H1 (cell line): ENCODE measurements at regions of chr12 and their contacts with region 1.

Region 1: DNA sequence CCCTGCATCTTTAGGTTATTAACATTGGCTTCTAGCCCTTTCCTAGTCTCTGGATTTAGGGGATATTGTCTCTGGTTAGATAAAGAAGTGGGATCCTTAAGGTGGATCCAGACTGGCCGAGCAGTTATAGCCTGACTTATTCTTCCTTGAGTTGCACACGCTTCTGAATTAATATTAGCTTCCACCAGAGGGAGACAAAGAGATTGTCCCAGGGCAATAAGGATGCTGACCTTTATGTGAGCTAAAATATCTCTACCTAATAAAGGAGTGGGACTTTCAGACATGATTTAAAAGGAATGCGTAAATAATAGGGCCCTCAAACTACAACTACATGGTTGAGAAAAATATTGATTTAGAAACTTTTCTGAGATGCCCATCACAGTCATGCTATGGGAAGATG is 139.7 kb downstream of the SLCO1B3 start:
- DNase-seq: no peak
- H3K4me3 ChIP-seq: no peak overlapping the region
- H3K27ac ChIP-seq: no peak overlapping the region
- H3K4me1 ChIP-seq: no peaks in the 10 kb centered on the region
- H3K27me3 ChIP-seq: no peaks in the 10 kb centered on the region
- CTCF ChIP-seq: peak in 2 of 3 experiments; percentile 45 to 54; a peak in 3 of 4 replicates
- EP300 ChIP-seq: no peak
- POLR2A ChIP-seq: no peak
- RAD21 ChIP-seq: peak; percentile 51 to 55

Region 2: GRCh38 chr12:20696181-20696905 is 253.9 kb before region 1 on chr12:
- CTCF ChIA-PET with region 1: no interaction called
- POLR2A ChIA-PET with region 1: no interaction called
- DNase-seq: no peak
- H3K4me3 ChIP-seq: no peak overlapping the region
- H3K27ac ChIP-seq: no peak overlapping the region
- H3K4me1 ChIP-seq: peaks cover 0 to 4% (median 4%) of the 10 kb centered on the region in 4 experiments; a peak in 4 of 7 replicates
- H3K27me3 ChIP-seq: no peaks in the 10 kb centered on the region
- CTCF ChIP-seq: no peak
- EP300 ChIP-seq: no peak
- POLR2A ChIP-seq: no peak
- RAD21 ChIP-seq: no peak

Region 3: DNA sequence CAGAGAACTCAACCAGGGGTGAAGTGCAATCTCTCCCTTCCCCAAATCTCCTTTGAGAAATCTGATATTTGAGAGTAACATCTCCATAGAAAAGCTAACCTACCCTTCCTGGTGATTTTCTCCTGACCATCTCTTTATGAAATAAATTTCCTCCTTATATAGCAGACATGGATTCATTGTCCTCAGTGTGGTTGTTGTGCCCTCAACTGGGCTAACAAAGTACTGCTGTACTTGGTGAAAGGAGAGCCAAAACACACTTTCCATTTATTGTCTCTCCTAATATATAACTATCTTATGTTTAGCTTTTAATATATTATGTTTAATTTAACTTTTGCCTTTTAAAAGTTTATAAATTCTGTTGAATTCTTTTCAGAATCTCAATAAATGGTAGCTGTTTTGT is 115.6 kb after region 1 on chr12:
- CTCF ChIA-PET with region 1: interaction called, 14 read pairs
- POLR2A ChIA-PET with region 1: no interaction called
- DNase-seq: no peak
- H3K4me3 ChIP-seq: no peak overlapping the region
- H3K27ac ChIP-seq: no peak overlapping the region
- H3K4me1 ChIP-seq: no peaks in the 10 kb centered on the region
- H3K27me3 ChIP-seq: no peaks in the 10 kb centered on the region
- CTCF ChIP-seq: peak in 2 of 3 experiments; percentile 54 to 56; a peak in 3 of 4 replicates
- EP300 ChIP-seq: no peak
- POLR2A ChIP-seq: no peak
- RAD21 ChIP-seq: peak; percentile 77 to 78